Left lung (tissue), 14 donors: ENCODE measurements at regions of chrX and their contacts with region 1.

Region 1: GRCh38 chrX:101803451-101803850 is 128.4 kb downstream of the ZMAT1 start:
- DNase-seq: peak in 1 of 4 donors; percentile 39
- ATAC-seq: no peak
- H3K4me3 ChIP-seq: no peak overlapping the region
- H3K27ac ChIP-seq: no peak overlapping the region
- H3K4me1 ChIP-seq: no peaks in the 10 kb centered on the region
- H3K27me3 ChIP-seq: peaks cover 0 to 5% of the 10 kb centered on the region in 2 donors
- CTCF ChIP-seq: peak; percentile 36 to 56

Region 2: GRCh38 chrX:101595739-101596419 is 207.6 kb before region 1 on chrX:
- intact Hi-C with region 1: loop called in 1 of 2 experiments (anchors 5 kb)
- DNase-seq: peak in 1 of 4 donors; percentile 72
- ATAC-seq: peak; percentile 94
- H3K4me3 ChIP-seq: no peak overlapping the region
- H3K27ac ChIP-seq: no peak overlapping the region
- H3K4me1 ChIP-seq: no peaks in the 10 kb centered on the region
- H3K27me3 ChIP-seq: peaks cover 0 to 4% of the 10 kb centered on the region in 2 donors
- CTCF ChIP-seq: peak; percentile 23 to 49